CD4-positive, alpha-beta T cell (primary cell): ENCODE measurements at regions of chr6 and their contacts with region 1.

Region 1: GRCh38 chr6:15264902-15265761 is 19.3 kb downstream of the JARID2 start:
- DNase-seq: no peak
- ATAC-seq: no peak
- H3K4me3 ChIP-seq: no peak overlapping the region
- H3K4me3 Mint-ChIP-seq: peak overlapping the region; percentile 62
- H3K27ac ChIP-seq: no peak overlapping the region
- H3K27ac Mint-ChIP-seq: peak overlapping the region; percentile 23
- H3K4me1 ChIP-seq: peaks cover 75% of the 10 kb centered on the region
- H3K4me1 Mint-ChIP-seq: peaks cover 93% of the 10 kb centered on the region
- H3K27me3 ChIP-seq: no peaks in the 10 kb centered on the region
- H3K27me3 Mint-ChIP-seq: no peaks in the 10 kb centered on the region
- CTCF ChIP-seq: no peak

Region 2: DNA sequence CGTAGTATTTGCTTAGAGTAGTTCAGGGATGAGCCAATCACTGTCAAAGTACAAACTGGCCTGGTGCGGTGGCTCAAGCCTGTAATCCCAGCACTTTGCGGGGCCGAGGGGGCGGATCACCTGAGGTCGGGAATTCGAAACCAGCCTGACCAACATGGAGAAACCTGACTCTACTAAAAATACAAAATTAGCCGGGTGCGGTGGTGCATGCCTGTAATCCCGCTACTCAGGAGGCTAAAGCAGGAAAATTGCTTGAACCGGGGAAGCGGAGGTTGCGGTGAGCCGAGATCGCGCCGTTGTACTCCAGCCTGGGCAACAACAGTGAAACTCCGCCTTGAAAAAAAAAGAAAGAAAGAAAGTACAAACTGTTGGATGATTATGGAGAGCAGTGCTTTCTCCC is 46.7 kb before region 1 on chr6:
- CTCF ChIA-PET with region 1: no interaction called
- POLR2A ChIA-PET with region 1: no interaction called
- intact Hi-C with region 1: no loop called
- DNase-seq: no peak
- ATAC-seq: no peak
- H3K4me3 ChIP-seq: no peak overlapping the region
- H3K4me3 Mint-ChIP-seq: no peak overlapping the region
- H3K27ac ChIP-seq: no peak overlapping the region
- H3K27ac Mint-ChIP-seq: no peak overlapping the region
- H3K4me1 ChIP-seq: no peaks in the 10 kb centered on the region
- H3K4me1 Mint-ChIP-seq: no peaks in the 10 kb centered on the region
- H3K27me3 ChIP-seq: no peaks in the 10 kb centered on the region
- H3K27me3 Mint-ChIP-seq: no peaks in the 10 kb centered on the region
- CTCF ChIP-seq: no peak

Region 3: GRCh38 chr6:15254070-15254841 is 10.9 kb before region 1 on chr6:
- CTCF ChIA-PET with region 1: no interaction called
- POLR2A ChIA-PET with region 1: interaction called, 18 read pairs
- intact Hi-C with region 1: loop called in 1 of 2 experiments (anchors 2 kb)
- DNase-seq: peak in 2 of 14 experiments; percentile 35 to 46
- ATAC-seq: no peak
- H3K4me3 ChIP-seq: no peak overlapping the region
- H3K4me3 Mint-ChIP-seq: peak overlapping the region; percentile 80
- H3K27ac ChIP-seq: peak overlapping the region in 1 of 2 donors; percentile 46
- H3K27ac Mint-ChIP-seq: peak overlapping the region; percentile 96
- H3K4me1 ChIP-seq: peaks cover 74% of the 10 kb centered on the region
- H3K4me1 Mint-ChIP-seq: peaks cover 99% of the 10 kb centered on the region
- H3K27me3 ChIP-seq: no peaks in the 10 kb centered on the region
- H3K27me3 Mint-ChIP-seq: no peaks in the 10 kb centered on the region
- CTCF ChIP-seq: no peak

Region 4: GRCh38 chr6:15299430-15300131 is 34.4 kb after region 1 on chr6:
- CTCF ChIA-PET with region 1: no interaction called
- POLR2A ChIA-PET with region 1: no interaction called
- intact Hi-C with region 1: loop called in 1 of 2 experiments (anchors 5 kb)
- DNase-seq: peak in 6 of 14 experiments; percentile 18 to 64 (median 44)
- ATAC-seq: peak; percentile 45
- H3K4me3 ChIP-seq: no peak overlapping the region
- H3K4me3 Mint-ChIP-seq: peak overlapping the region; percentile 11
- H3K27ac ChIP-seq: no peak overlapping the region
- H3K27ac Mint-ChIP-seq: peak overlapping the region; percentile 53
- H3K4me1 ChIP-seq: peaks cover 42% of the 10 kb centered on the region
- H3K4me1 Mint-ChIP-seq: peaks cover 75% of the 10 kb centered on the region
- H3K27me3 ChIP-seq: no peaks in the 10 kb centered on the region
- H3K27me3 Mint-ChIP-seq: no peaks in the 10 kb centered on the region
- CTCF ChIP-seq: no peak